Heart right ventricle (tissue), 16 donors: ENCODE measurements at regions of chr11 and their contacts with region 1.

Region 1: GRCh38 chr11:2186669-2187279 is 15.2 kb upstream of the TH start:
- DNase-seq: no peak
- ATAC-seq: peak in 6 of 8 donors; percentile 43 to 60 (median 50)
- H3K4me3 ChIP-seq: no peak overlapping the region
- H3K27ac ChIP-seq: no peak overlapping the region
- H3K4me1 ChIP-seq: peaks cover 0 to 11% (median 0%) of the 10 kb centered on the region in 9 donors
- H3K27me3 ChIP-seq: peaks cover 0 to 49% (median 30%) of the 10 kb centered on the region in 7 donors
- CTCF ChIP-seq: peak in 8 of 9 donors; percentile 32 to 66 (median 58)

Region 2: DNA sequence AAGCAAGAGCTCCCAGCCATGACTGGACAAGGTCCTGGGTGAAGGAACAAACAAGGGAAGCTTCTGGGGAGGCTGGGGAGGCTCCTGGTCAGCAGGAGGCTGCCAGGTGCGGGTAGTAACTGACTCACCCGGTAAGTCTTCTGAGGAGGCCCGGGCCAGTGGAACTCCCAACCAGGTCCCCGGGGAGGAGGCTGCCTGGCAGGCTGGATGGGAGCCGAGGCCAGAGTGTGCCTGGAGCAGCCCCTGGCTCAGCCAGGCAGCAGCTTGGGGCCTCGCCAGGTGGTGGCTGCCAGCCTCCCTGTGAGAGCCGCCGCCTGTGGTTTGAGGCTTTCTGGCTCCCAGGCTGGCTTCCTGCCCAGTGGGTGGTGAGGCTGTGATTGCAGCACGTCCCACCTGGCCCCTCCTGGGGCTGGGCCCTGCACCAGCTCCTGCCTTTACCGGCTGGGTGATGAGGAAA is 93.8 kb before region 1 on chr11:
- intact Hi-C with region 1: no loop called
- DNase-seq: peak; percentile 76 to 86
- ATAC-seq: peak; percentile 37 to 88 (median 74)
- H3K4me3 ChIP-seq: no peak overlapping the region
- H3K27ac ChIP-seq: peak overlapping the region in 1 of 10 donors; percentile 27
- H3K4me1 ChIP-seq: peaks cover 12 to 41% (median 32%) of the 10 kb centered on the region in 9 donors
- H3K27me3 ChIP-seq: no peaks in the 10 kb centered on the region
- CTCF ChIP-seq: no peak

Region 3: GRCh38 chr11:2208691-2209369 is 22.1 kb after region 1 on chr11:
- intact Hi-C with region 1: no loop called
- DNase-seq: peak in 1 of 2 donors; percentile 2
- ATAC-seq: peak in 3 of 8 donors; percentile 18 to 33 (median 19)
- H3K4me3 ChIP-seq: no peak overlapping the region
- H3K27ac ChIP-seq: no peak overlapping the region
- H3K4me1 ChIP-seq: peaks cover 0 to 4% (median 0%) of the 10 kb centered on the region in 9 donors
- H3K27me3 ChIP-seq: peaks cover 0 to 15% (median 3%) of the 10 kb centered on the region in 7 donors
- CTCF ChIP-seq: no peak

Region 4: DNA sequence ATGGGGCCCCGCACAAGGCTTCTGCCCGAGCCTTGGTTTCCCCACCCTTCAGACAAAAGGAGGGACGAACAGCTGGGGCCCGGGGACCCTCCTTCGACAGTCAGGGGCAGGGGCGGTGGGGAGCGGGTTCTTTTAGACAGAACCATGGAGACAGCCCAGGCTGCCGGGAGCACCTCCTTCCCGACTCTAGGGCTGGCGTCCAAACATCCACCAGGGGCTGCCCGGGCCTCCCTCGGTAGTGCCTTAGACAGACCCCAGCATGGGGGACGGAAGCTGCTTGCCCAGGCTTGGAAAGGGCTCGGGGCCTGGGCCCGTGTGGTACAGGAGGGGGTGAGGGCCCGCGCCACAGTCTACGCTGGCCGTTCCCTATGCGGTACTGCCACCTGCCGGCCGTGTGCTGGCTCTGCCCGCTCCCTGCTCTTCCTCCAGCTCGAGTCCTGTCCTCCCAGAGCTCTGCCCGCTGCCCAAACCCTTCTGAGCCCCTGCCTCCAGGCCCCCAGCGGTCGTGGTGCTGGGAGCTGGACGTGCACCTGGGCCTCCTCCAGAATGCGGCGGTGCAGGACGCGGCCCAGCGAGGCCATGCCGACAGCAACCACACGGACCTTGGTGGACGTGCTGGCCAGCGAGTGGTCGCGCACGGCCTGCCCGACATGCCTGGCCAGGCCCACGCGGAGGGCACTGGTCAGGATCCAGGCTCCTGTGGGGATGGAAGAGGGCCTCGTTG is 233.9 kb after region 1 on chr11:
- intact Hi-C with region 1: loop called in 3 of 10 experiments (anchors 2 kb)
- DNase-seq: peak; percentile 65 to 83
- ATAC-seq: peak; percentile 89 to 97 (median 94)
- H3K4me3 ChIP-seq: peak overlapping the region in 4 of 10 donors; percentile 3 to 27 (median 12)
- H3K27ac ChIP-seq: no peak overlapping the region
- H3K4me1 ChIP-seq: peaks cover 0 to 15% (median 9%) of the 10 kb centered on the region in 9 donors
- H3K27me3 ChIP-seq: peaks cover 0 to 18% (median 6%) of the 10 kb centered on the region in 7 donors
- CTCF ChIP-seq: peak; percentile 83 to 97 (median 95)

Region 5: DNA sequence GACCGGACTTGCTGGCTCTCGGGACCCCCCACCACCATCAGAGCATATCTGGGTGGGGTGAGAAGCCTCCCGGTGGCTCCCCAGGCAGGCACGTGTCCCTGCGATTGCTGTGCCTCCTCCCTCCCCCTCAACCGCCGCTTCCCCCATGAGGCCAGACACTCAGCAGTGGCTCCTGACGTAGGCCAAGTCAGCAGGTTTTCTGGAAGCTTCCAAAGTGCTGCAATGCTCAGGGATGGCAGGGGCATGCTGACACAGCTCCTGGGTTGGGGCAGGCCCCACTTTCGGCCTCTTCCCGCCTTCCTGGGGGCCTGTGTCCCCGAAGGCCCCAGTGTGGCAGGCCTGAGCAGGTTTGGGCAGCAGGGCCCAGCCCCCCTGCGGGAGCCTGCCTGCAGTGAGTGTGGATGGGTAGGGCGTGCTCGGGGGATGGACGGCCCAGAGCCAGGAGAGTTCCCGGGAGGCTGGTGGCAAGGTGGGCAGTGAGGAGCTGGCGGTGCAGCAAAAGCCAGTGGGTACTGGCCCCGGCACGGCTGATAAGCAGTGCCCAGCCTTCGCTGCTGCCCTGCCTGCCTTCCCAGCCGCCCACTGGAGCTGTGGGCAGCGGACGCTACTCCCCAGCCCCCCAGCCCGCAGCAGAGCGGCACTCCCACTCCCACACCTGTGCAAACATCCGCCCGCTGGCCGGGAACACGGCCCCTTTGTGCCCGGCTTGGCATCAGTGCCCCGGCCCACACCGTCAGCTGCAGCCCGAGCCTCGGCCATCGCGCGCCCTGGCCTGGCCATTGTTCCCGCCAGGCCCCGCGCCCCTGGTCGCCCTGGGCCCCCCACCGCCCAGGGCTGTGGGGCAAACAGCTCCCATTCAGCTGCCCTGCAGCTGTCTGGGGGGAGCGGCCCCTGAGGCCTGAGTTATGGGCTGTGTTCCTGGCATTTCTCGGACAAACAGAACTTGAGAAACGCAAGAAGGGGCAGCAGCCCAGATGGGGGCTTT is 388.1 kb after region 1 on chr11:
- intact Hi-C with region 1: no loop called
- DNase-seq: peak in 1 of 2 donors; percentile 4
- ATAC-seq: no peak
- H3K4me3 ChIP-seq: no peak overlapping the region
- H3K27ac ChIP-seq: no peak overlapping the region
- H3K4me1 ChIP-seq: peaks cover 0 to 23% (median 9%) of the 10 kb centered on the region in 9 donors
- H3K27me3 ChIP-seq: no peaks in the 10 kb centered on the region
- CTCF ChIP-seq: no peak